Psoas muscle (tissue), 8 donors: ENCODE measurements at regions of chr5 and their contacts with region 1.

Region 1: GRCh38 chr5:149749481-149750365 is 19.6 kb downstream of the PPARGC1B start:
- DNase-seq: no peak
- ATAC-seq: peak; percentile 38 to 66 (median 55)
- H3K4me3 ChIP-seq: no peak overlapping the region
- H3K27ac ChIP-seq: peak overlapping the region; percentile 89
- H3K4me1 ChIP-seq: peaks cover 69% of the 10 kb centered on the region
- H3K27me3 ChIP-seq: no peaks in the 10 kb centered on the region
- CTCF ChIP-seq: no peak

Region 2: GRCh38 chr5:149656576-149657182 is 93.0 kb before region 1 on chr5:
- intact Hi-C with region 1: no loop called
- DNase-seq: peak in 1 of 2 donors; percentile 49
- ATAC-seq: peak in 3 of 4 donors; percentile 43 to 55 (median 49)
- H3K4me3 ChIP-seq: no peak overlapping the region
- H3K27ac ChIP-seq: no peak overlapping the region
- H3K4me1 ChIP-seq: peaks cover 26% of the 10 kb centered on the region
- H3K27me3 ChIP-seq: no peaks in the 10 kb centered on the region
- CTCF ChIP-seq: peak; percentile 65

Region 3: DNA sequence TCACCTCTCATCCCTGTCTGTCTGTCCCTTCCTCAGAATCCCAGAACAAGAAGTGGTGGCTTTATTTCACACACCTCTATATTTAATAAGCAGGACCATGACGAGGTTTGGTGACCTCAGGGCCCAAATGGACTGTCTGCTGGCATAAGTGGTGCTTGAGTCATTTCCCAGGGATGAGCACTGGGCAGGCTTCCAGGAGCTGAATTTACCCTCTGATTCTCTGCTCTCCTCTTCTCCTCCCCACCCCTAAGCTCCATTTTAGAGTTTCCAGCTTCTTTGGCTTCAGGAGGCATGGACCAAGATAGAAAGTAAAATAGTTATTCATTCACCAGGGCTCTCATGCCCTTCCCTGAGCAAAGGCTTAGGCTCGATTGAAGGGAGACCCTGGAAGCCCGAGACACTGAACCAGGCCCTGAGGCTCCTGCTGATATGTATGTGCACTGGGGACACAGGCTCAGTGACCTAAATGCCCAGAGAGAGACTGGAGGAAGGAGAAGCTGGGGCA is 49.4 kb after region 1 on chr5:
- intact Hi-C with region 1: loop called in 1 of 2 experiments (anchors 5 kb)
- DNase-seq: peak; percentile 79 to 90
- ATAC-seq: peak; percentile 83 to 87 (median 83)
- H3K4me3 ChIP-seq: peak overlapping the region; percentile 41
- H3K27ac ChIP-seq: peak overlapping the region; percentile 99
- H3K4me1 ChIP-seq: peaks cover 98% of the 10 kb centered on the region
- H3K27me3 ChIP-seq: no peaks in the 10 kb centered on the region
- CTCF ChIP-seq: no peak